ENCODE measurements at regions of chr19 and their contacts with region 1.

Region 1: GRCh38 chr19:42283143-42284065 is 14.4 kb downstream of the CIC start:
- DNase-seq: peak; percentile 95
- ATAC-seq: peak; percentile 73
- H3K4me3 Mint-ChIP-seq: no peak overlapping the region
- H3K27ac Mint-ChIP-seq: no peak overlapping the region
- H3K4me1 Mint-ChIP-seq: peaks cover 34% of the 10 kb centered on the region
- H3K27me3 Mint-ChIP-seq: no peaks in the 10 kb centered on the region
- CTCF ChIP-seq: no peak

Region 2: GRCh38 chr19:42038666-42039065 is 244.7 kb before region 1 on chr19:
- CTCF ChIA-PET with region 1: no interaction called
- POLR2A ChIA-PET with region 1: no interaction called
- DNase-seq: no peak
- ATAC-seq: no peak
- H3K4me3 Mint-ChIP-seq: no peak overlapping the region
- H3K27ac Mint-ChIP-seq: no peak overlapping the region
- H3K4me1 Mint-ChIP-seq: peaks cover 9% of the 10 kb centered on the region
- H3K27me3 Mint-ChIP-seq: no peaks in the 10 kb centered on the region
- CTCF ChIP-seq: no peak

Region 3: GRCh38 chr19:42108527-42109389 is 174.6 kb before region 1 on chr19:
- CTCF ChIA-PET with region 1: interaction called, 19 read pairs
- POLR2A ChIA-PET with region 1: no interaction called
- DNase-seq: peak; percentile 91
- ATAC-seq: peak; percentile 96
- H3K4me3 Mint-ChIP-seq: no peak overlapping the region
- H3K27ac Mint-ChIP-seq: no peak overlapping the region; the same call in 1 of the 2 replicates
- H3K4me1 Mint-ChIP-seq: peaks cover 13% of the 10 kb centered on the region
- H3K27me3 Mint-ChIP-seq: peaks cover 24% of the 10 kb centered on the region
- CTCF ChIP-seq: peak; percentile 95

Region 4: GRCh38 chr19:42219812-42220750 is 63.3 kb before region 1 on chr19 and contains the start of gene ZNF526:
- CTCF ChIA-PET with region 1: interaction called, 18 read pairs
- POLR2A ChIA-PET with region 1: no interaction called
- DNase-seq: peak; percentile 99
- ATAC-seq: peak; percentile 87
- H3K4me3 Mint-ChIP-seq: peak within 1 kb of the TSS; percentile 97
- H3K27ac Mint-ChIP-seq: peak within 1 kb of the TSS; percentile 98
- H3K4me1 Mint-ChIP-seq: peaks cover 40% of the 10 kb centered on the region
- H3K27me3 Mint-ChIP-seq: no peaks in the 10 kb centered on the region; the same call in 1 of the 2 replicates
- CTCF ChIP-seq: no peak
- total RNA-seq, gene ZNF526: 16.1 to 18.3 TPM (median 16.4 TPM) in 3 replicates

Region 5: DNA sequence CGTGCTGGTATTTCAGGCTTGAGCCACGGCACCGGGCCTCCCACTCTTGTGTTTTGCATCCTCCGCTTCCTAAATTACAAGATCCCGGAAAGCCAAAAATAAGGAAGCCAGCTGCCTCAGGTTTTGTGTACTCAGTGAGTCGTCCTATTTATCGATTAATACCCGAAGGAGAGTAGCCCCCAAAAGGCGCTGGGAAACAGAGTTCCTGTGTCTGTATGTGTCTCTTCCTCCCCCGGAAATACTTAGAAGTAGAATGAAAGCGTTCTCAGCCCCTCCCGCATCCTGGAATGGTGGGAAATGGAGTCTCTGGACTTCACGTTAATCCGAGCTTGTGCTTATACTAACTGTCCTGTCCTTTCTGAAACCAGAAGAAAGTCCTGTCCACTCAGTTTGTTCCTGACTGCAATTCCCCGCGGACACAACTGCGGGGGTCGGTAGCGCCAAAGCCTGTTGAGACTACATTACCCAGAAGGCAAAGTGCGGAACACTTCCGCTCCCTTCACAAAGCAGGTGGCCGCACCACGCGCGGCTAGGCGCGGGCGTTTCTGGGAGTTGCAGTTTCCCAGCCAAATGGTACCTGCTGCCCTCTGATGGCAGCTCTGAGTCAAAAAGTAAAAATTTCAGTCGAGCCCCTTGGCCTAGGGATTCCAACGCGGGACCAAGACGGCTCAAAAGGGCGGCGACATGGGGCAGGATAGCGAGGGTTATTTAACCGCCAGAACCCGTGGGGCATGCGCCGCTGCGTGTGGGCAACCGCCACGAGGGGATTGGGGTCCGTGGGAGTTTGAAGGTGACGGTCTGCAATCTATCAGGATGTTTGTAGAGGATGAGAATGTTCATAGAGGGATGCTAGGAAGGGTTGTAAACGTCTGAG is 38.8 kb before region 1 on chr19:
- CTCF ChIA-PET with region 1: interaction called, 239 read pairs
- POLR2A ChIA-PET with region 1: interaction called, 28 read pairs
- DNase-seq: peak; percentile 95
- ATAC-seq: peak; percentile 19
- H3K4me3 Mint-ChIP-seq: peak overlapping the region; percentile 89
- H3K27ac Mint-ChIP-seq: peak overlapping the region; percentile 97
- H3K4me1 Mint-ChIP-seq: peaks cover 35% of the 10 kb centered on the region
- H3K27me3 Mint-ChIP-seq: no peaks in the 10 kb centered on the region
- CTCF ChIP-seq: no peak

Region 6: GRCh38 chr19:42268704-42269477 is 14.5 kb before region 1 on chr19 and contains the start of gene CIC:
- CTCF ChIA-PET with region 1: interaction called, 21 read pairs
- POLR2A ChIA-PET with region 1: interaction called, 5 read pairs
- DNase-seq: peak; percentile 100
- ATAC-seq: peak; percentile 94
- H3K4me3 Mint-ChIP-seq: peak within 1 kb of the TSS; percentile 80; the same call in 1 of the 2 replicates
- H3K27ac Mint-ChIP-seq: peak within 1 kb of the TSS; percentile 73
- H3K4me1 Mint-ChIP-seq: peaks cover 22% of the 10 kb centered on the region
- H3K27me3 Mint-ChIP-seq: peaks cover 13% of the 10 kb centered on the region
- CTCF ChIP-seq: no peak
- total RNA-seq, gene CIC: 53.0 to 58.5 TPM (median 55.8 TPM) in 3 replicates

Region 7: DNA sequence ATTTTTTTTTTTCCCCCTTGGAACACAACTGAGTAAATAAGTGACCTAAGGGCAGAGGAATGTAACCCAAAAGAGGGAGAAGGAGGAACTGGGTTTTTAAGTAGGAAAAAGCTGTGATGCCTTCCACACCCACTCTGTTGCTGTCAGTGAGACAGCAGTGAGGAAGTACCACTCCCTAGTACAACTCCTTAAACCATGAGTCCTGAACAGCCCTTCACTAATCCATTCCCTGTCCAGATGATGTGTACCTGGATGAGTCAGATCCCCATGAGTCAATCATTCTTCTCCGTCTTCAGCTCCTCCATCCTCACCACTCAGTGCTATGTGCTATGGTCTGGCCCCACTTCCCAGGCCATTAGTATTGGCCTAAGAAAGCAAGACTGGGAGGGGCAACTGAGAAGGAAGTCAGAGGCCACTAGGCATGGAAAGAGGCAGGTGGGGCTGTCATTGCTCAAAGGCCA is 172.2 kb after region 1 on chr19:
- CTCF ChIA-PET with region 1: no interaction called
- POLR2A ChIA-PET with region 1: no interaction called
- DNase-seq: no peak
- ATAC-seq: no peak
- H3K4me3 Mint-ChIP-seq: no peak overlapping the region
- H3K27ac Mint-ChIP-seq: no peak overlapping the region
- H3K4me1 Mint-ChIP-seq: peaks cover 48% of the 10 kb centered on the region
- H3K27me3 Mint-ChIP-seq: no peaks in the 10 kb centered on the region; the same call in 1 of the 2 replicates
- CTCF ChIP-seq: no peak

Measured in WTC11 (cell line).